CD4-positive, alpha-beta T cell (primary cell): ENCODE measurements at regions of chr1 and their contacts with region 1.

Region 1: GRCh38 chr1:5370311-5370710 is 621.9 kb downstream of the NPHP4 start:
- DNase-seq: peak in 6 of 14 experiments; percentile 6 to 49 (median 31)
- ATAC-seq: peak; percentile 43
- H3K4me3 ChIP-seq: no peak overlapping the region
- H3K4me3 Mint-ChIP-seq: no peak overlapping the region
- H3K27ac ChIP-seq: no peak overlapping the region
- H3K27ac Mint-ChIP-seq: no peak overlapping the region
- H3K4me1 ChIP-seq: peaks cover 28% of the 10 kb centered on the region
- H3K4me1 Mint-ChIP-seq: peaks cover 17% of the 10 kb centered on the region
- H3K27me3 ChIP-seq: no peaks in the 10 kb centered on the region
- H3K27me3 Mint-ChIP-seq: peaks cover 3% of the 10 kb centered on the region
- CTCF ChIP-seq: no peak

Region 2: DNA sequence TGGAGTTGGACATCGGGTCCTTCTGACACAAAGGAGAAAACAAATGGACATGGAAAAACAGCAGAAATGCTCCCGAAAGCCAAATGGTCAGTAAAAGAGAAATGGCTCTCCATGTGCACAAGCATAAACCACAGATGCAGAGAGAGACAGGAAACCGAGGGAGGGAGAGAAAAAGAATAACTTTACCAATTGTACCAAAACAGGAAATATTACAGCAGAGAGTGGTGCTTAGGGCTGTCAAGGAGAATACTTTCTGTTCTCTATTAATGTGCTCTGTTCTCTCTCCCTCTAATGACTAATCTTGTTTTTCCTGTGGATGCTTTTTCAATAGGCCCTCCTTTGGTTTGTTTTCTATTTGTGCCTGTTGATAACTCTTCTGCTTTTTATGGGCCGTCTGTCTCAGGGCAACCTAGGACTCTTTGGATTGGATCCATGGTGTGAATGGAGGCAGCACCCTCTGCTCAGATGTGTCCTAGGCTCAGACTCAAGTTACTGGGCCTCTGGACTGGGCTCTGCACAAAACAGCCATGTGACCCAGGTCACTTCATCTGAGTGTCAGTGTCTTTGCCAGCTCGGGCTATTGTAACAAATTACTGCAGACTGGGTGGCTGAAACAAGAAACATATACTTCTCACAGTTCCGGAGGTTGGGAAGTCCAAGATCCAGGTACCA is 41.1 kb before region 1 on chr1:
- CTCF ChIA-PET with region 1: no interaction called
- POLR2A ChIA-PET with region 1: interaction called, 5 read pairs
- intact Hi-C with region 1: loop called in 1 of 2 experiments (anchors 5 kb)
- DNase-seq: peak in 4 of 14 experiments; percentile 4 to 66 (median 10)
- ATAC-seq: peak; percentile 24
- H3K4me3 ChIP-seq: peak overlapping the region; percentile 15
- H3K4me3 Mint-ChIP-seq: peak overlapping the region; percentile 73
- H3K27ac ChIP-seq: peak overlapping the region; percentile 64 to 83
- H3K27ac Mint-ChIP-seq: peak overlapping the region; percentile 95
- H3K4me1 ChIP-seq: peaks cover 36% of the 10 kb centered on the region
- H3K4me1 Mint-ChIP-seq: peaks cover 59% of the 10 kb centered on the region
- H3K27me3 ChIP-seq: no peaks in the 10 kb centered on the region
- H3K27me3 Mint-ChIP-seq: no peaks in the 10 kb centered on the region
- CTCF ChIP-seq: no peak